Head of caudate nucleus (tissue), 42 donors: ENCODE measurements at regions of chr10 and their contacts with region 1.

Region 1: DNA sequence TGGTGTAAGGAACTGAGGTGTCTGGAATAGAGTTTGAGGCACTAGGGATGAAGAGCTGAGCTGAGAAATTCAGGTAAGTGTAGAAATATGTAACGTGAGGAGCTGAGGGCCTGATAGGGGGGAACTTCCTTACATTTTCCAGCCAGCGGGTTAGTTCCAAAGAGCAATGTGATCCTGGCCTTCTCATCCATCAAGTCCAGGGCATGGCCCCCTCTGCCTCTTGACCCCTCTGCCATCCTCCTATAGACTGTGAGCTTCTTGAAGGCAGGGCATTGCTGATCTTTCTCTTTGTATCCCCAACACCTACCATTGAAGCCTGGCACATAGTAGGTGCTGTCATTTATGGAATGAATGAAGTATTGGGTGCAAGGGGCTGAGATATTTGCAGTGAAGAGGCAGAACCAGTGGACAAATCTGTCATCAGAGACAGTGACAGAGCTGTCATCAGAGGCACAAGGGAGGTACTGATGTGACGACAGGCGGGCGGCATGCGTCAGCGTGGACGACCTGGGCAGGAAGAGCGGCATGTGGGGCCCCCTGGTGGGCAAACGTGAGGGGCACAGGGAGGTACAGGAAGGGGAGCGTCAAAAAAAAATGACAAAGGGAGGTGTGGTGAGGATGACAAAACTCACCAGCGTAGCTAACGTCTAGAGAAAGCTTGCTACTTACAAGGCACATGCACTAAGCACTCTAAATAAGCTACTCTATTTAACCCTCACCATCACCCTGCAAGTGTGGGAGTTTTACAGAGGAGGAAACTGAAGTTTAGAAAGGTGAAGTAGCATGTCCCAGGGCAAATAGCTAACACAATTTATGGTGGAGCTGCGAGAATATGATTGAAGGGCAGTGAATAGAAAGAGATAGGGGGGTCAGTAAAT is 5.2 kb upstream of the CAMK2G start:
- DNase-seq: peak; percentile 38 to 87 (median 75)

Region 2: DNA sequence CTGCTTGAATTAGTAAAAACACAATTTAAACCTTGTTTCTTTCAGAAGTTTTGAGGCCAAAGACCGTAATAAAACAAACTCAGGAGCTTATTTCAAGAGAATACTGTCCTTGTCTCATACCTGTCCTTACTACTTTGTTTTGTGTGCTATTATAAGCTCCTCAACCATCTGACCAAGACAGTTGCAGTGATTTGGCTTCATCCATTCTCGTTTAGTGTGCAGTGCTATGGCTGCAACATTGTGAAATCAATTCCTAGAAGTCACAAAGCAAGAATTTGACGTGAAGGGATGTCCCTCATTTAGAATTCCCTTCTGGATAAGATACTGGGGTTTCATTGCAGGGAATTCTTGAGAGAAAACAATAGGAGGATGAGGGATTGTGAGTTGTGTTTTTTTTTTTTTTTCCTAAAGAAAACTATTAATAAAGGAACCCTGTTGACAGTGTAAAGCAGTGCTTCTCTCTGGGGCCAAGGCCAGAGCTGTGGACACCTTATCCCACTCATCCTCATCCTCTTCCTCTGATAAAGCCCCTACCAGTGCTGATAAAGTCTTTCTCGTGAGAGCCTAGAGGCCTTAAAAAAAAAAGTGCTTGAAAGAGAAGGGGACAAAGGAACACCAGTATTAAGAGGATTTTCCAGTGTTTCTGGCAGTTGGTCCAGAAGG is 986.3 kb before region 1 on chr10 and contains the start of gene OIT3:
- intact Hi-C with region 1: no loop called
- DNase-seq: no peak

Region 3: GRCh38 chr10:73848821-73849489 is 30.6 kb before region 1 on chr10:
- intact Hi-C with region 1: loop called (anchors 1 kb)
- DNase-seq: peak; percentile 50 to 94 (median 86)

Region 4: GRCh38 chr10:73940634-73941221 is 61.2 kb after region 1 on chr10:
- intact Hi-C with region 1: loop called (anchors 10 kb)
- DNase-seq: peak; percentile 40 to 87 (median 73)

Region 5: DNA sequence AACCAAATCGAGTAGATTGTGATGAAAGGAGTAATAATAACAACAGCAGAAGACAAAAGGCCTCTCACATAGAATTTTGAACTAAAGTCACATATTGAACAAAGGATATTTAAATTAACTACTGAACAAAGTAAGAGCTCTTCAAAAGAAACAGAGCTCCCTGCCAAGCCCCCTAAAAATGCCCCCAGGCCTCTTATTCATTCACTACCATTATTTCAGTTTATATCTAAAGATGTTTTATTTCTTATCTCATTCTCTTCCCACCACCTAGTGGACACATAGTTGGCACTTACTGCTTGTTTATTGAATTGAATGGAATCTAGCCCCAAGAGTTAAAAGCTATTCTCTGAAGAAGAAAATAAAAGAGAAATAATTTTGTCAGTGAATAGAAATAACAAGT is 155.8 kb after region 1 on chr10:
- intact Hi-C with region 1: no loop called
- DNase-seq: no peak